B cell (primary cell): ENCODE measurements at regions of chr2 and their contacts with region 1.

Region 1: GRCh38 chr2:159118115-159118858 is 149.8 kb downstream of the TANC1 start:
- DNase-seq: peak; percentile 79
- ATAC-seq: peak; percentile 63
- H3K4me3 ChIP-seq: no peak overlapping the region
- H3K4me3 Mint-ChIP-seq: no peak overlapping the region
- H3K27ac ChIP-seq: no peak overlapping the region
- H3K27ac Mint-ChIP-seq: no peak overlapping the region
- H3K4me1 ChIP-seq: peaks cover 0 to 6% of the 10 kb centered on the region in 2 donors
- H3K4me1 Mint-ChIP-seq: peaks cover 5% of the 10 kb centered on the region
- H3K27me3 ChIP-seq: peaks cover 0 to 2% (median 0%) of the 10 kb centered on the region in 4 experiments
- H3K27me3 Mint-ChIP-seq: peaks cover 5% of the 10 kb centered on the region
- CTCF ChIP-seq: peak; percentile 86

Region 2: GRCh38 chr2:158024288-158024898 is 1093.9 kb before region 1 on chr2:
- CTCF ChIA-PET with region 1: interaction called, 4 read pairs
- POLR2A ChIA-PET with region 1: no interaction called
- intact Hi-C with region 1: loop called (anchors 5 kb)
- DNase-seq: peak; percentile 51
- ATAC-seq: peak; percentile 60
- H3K4me3 ChIP-seq: no peak overlapping the region
- H3K4me3 Mint-ChIP-seq: no peak overlapping the region
- H3K27ac ChIP-seq: no peak overlapping the region
- H3K27ac Mint-ChIP-seq: no peak overlapping the region
- H3K4me1 ChIP-seq: no peaks in the 10 kb centered on the region
- H3K4me1 Mint-ChIP-seq: no peaks in the 10 kb centered on the region
- H3K27me3 ChIP-seq: no peaks in the 10 kb centered on the region
- H3K27me3 Mint-ChIP-seq: no peaks in the 10 kb centered on the region
- CTCF ChIP-seq: peak; percentile 90

Region 3: GRCh38 chr2:158753641-158754611 is 364.4 kb before region 1 on chr2:
- CTCF ChIA-PET with region 1: no interaction called
- POLR2A ChIA-PET with region 1: no interaction called
- intact Hi-C with region 1: loop called (anchors 10 kb)
- DNase-seq: peak; percentile 61
- ATAC-seq: peak; percentile 62
- H3K4me3 ChIP-seq: no peak overlapping the region
- H3K4me3 Mint-ChIP-seq: no peak overlapping the region
- H3K27ac ChIP-seq: no peak overlapping the region
- H3K27ac Mint-ChIP-seq: no peak overlapping the region
- H3K4me1 ChIP-seq: no peaks in the 10 kb centered on the region
- H3K4me1 Mint-ChIP-seq: no peaks in the 10 kb centered on the region
- H3K27me3 ChIP-seq: peaks cover 0 to 7% (median 1%) of the 10 kb centered on the region in 4 experiments
- H3K27me3 Mint-ChIP-seq: peaks cover 20% of the 10 kb centered on the region
- CTCF ChIP-seq: peak; percentile 93

Region 4: DNA sequence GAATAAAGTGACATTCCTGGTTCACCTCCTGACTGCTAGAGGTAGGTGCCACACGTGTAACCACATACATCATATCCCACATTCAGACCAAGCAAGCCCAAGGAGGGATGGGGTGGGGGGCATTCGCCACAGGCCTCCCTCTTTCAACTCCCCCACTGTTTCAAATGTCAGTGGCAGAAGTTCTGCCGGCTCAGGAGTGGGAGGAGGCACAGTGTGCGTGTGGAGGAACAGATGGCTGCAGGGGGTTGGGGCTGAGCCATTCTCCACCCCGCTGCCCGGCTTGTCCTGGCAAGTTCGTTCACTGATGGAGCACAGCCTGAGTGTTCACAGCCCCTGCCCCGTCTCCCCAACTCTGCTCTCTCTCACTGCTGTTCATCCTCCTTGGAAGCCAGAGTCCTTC is 225.3 kb before region 1 on chr2:
- CTCF ChIA-PET with region 1: interaction called, 10 read pairs
- POLR2A ChIA-PET with region 1: no interaction called
- intact Hi-C with region 1: no loop called
- DNase-seq: no peak
- ATAC-seq: no peak
- H3K4me3 ChIP-seq: no peak overlapping the region
- H3K4me3 Mint-ChIP-seq: no peak overlapping the region
- H3K27ac ChIP-seq: no peak overlapping the region
- H3K27ac Mint-ChIP-seq: no peak overlapping the region
- H3K4me1 ChIP-seq: no peaks in the 10 kb centered on the region
- H3K4me1 Mint-ChIP-seq: no peaks in the 10 kb centered on the region
- H3K27me3 ChIP-seq: peaks cover 0 to 2% (median 0%) of the 10 kb centered on the region in 4 experiments
- H3K27me3 Mint-ChIP-seq: peaks cover 8% of the 10 kb centered on the region
- CTCF ChIP-seq: no peak

Region 5: GRCh38 chr2:158903711-158904443 is 214.4 kb before region 1 on chr2:
- CTCF ChIA-PET with region 1: interaction called, 80 read pairs
- POLR2A ChIA-PET with region 1: no interaction called
- intact Hi-C with region 1: no loop called
- DNase-seq: no peak
- ATAC-seq: no peak
- H3K4me3 ChIP-seq: no peak overlapping the region
- H3K4me3 Mint-ChIP-seq: no peak overlapping the region
- H3K27ac ChIP-seq: no peak overlapping the region
- H3K27ac Mint-ChIP-seq: no peak overlapping the region
- H3K4me1 ChIP-seq: no peaks in the 10 kb centered on the region
- H3K4me1 Mint-ChIP-seq: no peaks in the 10 kb centered on the region
- H3K27me3 ChIP-seq: no peaks in the 10 kb centered on the region
- H3K27me3 Mint-ChIP-seq: peaks cover 3% of the 10 kb centered on the region
- CTCF ChIP-seq: no peak

Region 6: GRCh38 chr2:159035790-159036411 is 82.4 kb before region 1 on chr2:
- CTCF ChIA-PET with region 1: interaction called, 12 read pairs
- POLR2A ChIA-PET with region 1: no interaction called
- intact Hi-C with region 1: no loop called
- DNase-seq: peak; percentile 56
- ATAC-seq: no peak
- H3K4me3 ChIP-seq: no peak overlapping the region
- H3K4me3 Mint-ChIP-seq: no peak overlapping the region
- H3K27ac ChIP-seq: no peak overlapping the region
- H3K27ac Mint-ChIP-seq: no peak overlapping the region
- H3K4me1 ChIP-seq: no peaks in the 10 kb centered on the region
- H3K4me1 Mint-ChIP-seq: no peaks in the 10 kb centered on the region
- H3K27me3 ChIP-seq: no peaks in the 10 kb centered on the region
- H3K27me3 Mint-ChIP-seq: no peaks in the 10 kb centered on the region
- CTCF ChIP-seq: no peak

Region 7: DNA sequence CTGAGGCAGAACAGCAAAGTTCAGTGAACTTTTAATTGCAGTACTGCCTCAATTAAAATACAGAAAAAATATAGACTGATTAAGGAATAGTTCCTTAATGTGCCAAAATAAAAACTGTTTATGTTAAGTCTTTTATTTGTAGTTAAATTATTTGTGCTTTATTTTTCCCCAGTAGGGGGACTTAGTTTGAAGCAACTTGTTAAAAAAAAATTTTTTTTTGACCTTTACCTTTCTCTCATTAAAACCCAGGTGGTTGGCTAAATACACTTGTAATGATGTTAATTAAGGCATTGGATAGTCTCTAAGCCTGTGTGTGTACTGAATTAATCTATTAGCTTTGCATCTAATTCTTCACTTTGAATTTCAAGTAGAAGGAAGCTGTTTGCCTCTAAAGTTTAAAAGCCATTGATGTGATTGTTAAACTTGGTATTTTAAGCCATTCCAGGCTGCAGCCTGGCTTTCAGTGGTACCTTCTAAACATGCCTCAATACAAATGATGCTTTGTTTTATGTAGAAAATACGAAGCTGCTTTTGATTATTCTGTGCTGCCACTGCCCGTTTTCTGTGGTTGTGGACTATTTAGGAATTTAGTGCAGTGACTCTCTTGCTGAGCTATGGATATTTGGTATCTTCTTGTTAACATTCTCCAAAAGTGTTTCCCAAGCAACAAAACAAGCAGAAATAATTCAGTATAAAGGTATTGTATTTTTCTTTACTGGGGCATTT is 46.9 kb before region 1 on chr2:
- CTCF ChIA-PET with region 1: interaction called, 10 read pairs
- POLR2A ChIA-PET with region 1: no interaction called
- intact Hi-C with region 1: no loop called
- DNase-seq: no peak
- ATAC-seq: no peak
- H3K4me3 ChIP-seq: no peak overlapping the region
- H3K4me3 Mint-ChIP-seq: no peak overlapping the region
- H3K27ac ChIP-seq: no peak overlapping the region
- H3K27ac Mint-ChIP-seq: no peak overlapping the region
- H3K4me1 ChIP-seq: peaks cover 0 to 6% of the 10 kb centered on the region in 2 donors
- H3K4me1 Mint-ChIP-seq: peaks cover 7% of the 10 kb centered on the region
- H3K27me3 ChIP-seq: no peaks in the 10 kb centered on the region
- H3K27me3 Mint-ChIP-seq: no peaks in the 10 kb centered on the region
- CTCF ChIP-seq: no peak

Region 8: GRCh38 chr2:159164457-159164911 is 46.2 kb after region 1 on chr2:
- CTCF ChIA-PET with region 1: no interaction called
- POLR2A ChIA-PET with region 1: no interaction called
- intact Hi-C with region 1: no loop called
- DNase-seq: no peak
- ATAC-seq: no peak
- H3K4me3 ChIP-seq: no peak overlapping the region
- H3K4me3 Mint-ChIP-seq: no peak overlapping the region
- H3K27ac ChIP-seq: no peak overlapping the region
- H3K27ac Mint-ChIP-seq: no peak overlapping the region
- H3K4me1 ChIP-seq: peaks cover 0 to 3% of the 10 kb centered on the region in 2 donors
- H3K4me1 Mint-ChIP-seq: peaks cover 12% of the 10 kb centered on the region
- H3K27me3 ChIP-seq: no peaks in the 10 kb centered on the region
- H3K27me3 Mint-ChIP-seq: peaks cover 3% of the 10 kb centered on the region
- CTCF ChIP-seq: no peak